SK-N-SH (cell line): ENCODE measurements at regions of chr12 and their contacts with region 1.

Region 1: DNA sequence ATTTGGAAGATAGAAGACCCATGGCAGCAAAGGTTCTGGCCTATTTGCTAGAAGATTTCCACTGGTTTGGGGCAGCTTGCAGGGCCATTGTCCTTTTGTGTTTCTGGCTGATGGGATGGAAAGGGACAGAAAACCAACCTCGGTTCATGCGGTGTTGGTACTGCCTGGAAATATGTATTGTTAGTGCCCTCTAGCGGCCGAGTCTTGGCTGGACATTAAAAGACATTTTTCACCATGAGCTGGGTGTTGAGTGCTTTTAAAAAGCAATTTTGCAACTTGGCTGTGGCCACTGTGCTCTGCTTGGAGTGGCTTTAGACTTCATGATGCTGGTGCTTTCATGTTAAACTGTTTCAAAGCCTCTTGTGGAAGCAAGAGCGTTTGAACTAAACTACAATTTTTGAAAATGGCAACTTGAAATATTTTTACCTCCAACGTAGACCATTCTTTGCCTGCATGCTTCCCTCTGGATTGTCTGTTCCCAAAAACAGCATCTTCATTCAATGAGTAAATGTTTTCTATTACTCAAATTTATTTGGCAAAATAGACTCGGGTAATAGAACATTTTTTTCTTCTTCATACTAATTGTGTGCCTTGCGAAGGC is 102.7 kb upstream of the TBX5 start:
- DNase-seq: peak; percentile 64
- H3K4me3 ChIP-seq: no peak overlapping the region; a peak in 1 of 4 replicates
- H3K27ac ChIP-seq: no peak overlapping the region
- H3K4me1 ChIP-seq: no peaks in the 10 kb centered on the region
- H3K27me3 ChIP-seq: peaks cover 14% of the 10 kb centered on the region; the same call in 1 of the 2 replicates
- CTCF ChIP-seq: peak; percentile 83
- EP300 ChIP-seq: no peak
- RAD21 ChIP-seq: peak; percentile 79

Region 2: DNA sequence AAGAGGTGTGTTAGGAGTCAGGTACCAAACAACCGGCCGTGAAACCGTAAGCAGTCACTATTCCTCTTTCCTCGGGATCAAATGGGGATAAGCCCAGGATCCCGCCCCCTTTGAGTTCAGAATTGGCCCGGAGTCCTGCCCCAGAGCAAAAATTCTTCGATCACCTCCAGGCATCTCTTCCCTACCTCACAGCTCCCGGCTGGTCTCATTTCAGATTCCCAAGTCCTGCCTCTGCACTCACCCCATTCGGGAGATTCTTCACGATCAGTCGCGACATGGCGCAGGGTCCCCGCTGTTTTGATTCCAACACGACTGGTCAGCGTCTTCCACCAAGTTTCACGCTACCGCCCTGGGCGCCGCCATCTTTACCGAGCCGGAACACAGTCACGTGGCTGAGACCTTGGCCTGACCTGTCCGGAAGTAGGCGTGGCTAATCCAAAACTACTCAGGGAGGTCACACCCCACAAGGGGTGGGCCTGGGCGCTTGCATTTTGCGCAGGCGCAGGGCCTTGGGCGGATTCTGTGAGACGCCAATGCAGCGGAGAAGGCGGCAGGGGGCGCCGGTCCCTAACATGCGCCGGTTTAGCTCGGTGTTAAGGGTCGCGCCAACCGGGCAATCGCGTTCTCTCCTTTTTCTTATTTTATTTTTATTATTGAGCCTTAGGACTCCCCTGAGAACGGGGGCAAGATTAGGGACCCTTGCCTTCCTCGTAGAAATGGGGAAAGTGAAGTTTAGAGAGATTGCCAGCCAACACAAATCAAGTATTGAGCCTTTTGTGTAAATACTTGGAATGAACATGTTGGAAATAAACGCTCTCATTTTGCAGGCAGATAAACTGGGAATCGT is 542.5 kb before region 1 on chr12 and contains the start of gene RBM19:
- CTCF ChIA-PET with region 1: interaction called, 10 read pairs
- POLR2A ChIA-PET with region 1: no interaction called
- DNase-seq: peak; percentile 95
- H3K4me3 ChIP-seq: peak within 1 kb of the TSS; percentile 80 to 93
- H3K27ac ChIP-seq: peak within 1 kb of the TSS; percentile 23 to 39; a peak in 2 of 4 replicates
- H3K4me1 ChIP-seq: peaks cover 0 to 9% of the 10 kb centered on the region in 2 experiments; a peak in 3 of 4 replicates
- H3K27me3 ChIP-seq: peaks cover 17% of the 10 kb centered on the region; the same call in 1 of the 2 replicates
- CTCF ChIP-seq: peak; percentile 93
- EP300 ChIP-seq: no peak
- RAD21 ChIP-seq: peak; percentile 55
- polyA plus RNA-seq, gene RBM19: 16.6 and 20.3 TPM in 2 replicates

Region 3: DNA sequence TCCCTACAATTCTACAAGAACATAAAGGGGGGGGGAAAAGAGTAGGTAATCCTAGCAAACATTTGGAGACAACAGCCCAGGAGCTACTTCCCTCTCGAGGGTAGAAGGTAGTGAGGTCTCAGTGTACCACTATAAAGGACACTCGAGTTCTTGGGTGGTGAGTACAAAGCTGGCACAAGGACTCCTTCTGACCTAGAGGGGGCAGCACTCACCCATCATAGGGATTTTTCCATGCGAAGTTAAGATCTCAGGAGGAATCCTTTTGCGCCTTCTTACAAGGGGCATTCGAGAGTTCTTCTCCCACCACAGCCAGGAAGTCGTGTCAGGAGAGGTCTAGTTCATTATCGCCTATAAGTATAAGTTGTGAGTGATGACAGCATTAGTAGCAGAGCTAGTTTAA is 342.3 kb before region 1 on chr12:
- CTCF ChIA-PET with region 1: interaction called, 40 read pairs
- POLR2A ChIA-PET with region 1: no interaction called
- DNase-seq: peak; percentile 34
- H3K4me3 ChIP-seq: peak overlapping the region in 1 of 2 experiments; percentile 41; a peak in 1 of 4 replicates
- H3K27ac ChIP-seq: no peak overlapping the region
- H3K4me1 ChIP-seq: no peaks in the 10 kb centered on the region
- H3K27me3 ChIP-seq: no peaks in the 10 kb centered on the region; the same call in 1 of the 2 replicates
- CTCF ChIP-seq: peak; percentile 66
- EP300 ChIP-seq: no peak
- RAD21 ChIP-seq: peak; percentile 70

Region 4: DNA sequence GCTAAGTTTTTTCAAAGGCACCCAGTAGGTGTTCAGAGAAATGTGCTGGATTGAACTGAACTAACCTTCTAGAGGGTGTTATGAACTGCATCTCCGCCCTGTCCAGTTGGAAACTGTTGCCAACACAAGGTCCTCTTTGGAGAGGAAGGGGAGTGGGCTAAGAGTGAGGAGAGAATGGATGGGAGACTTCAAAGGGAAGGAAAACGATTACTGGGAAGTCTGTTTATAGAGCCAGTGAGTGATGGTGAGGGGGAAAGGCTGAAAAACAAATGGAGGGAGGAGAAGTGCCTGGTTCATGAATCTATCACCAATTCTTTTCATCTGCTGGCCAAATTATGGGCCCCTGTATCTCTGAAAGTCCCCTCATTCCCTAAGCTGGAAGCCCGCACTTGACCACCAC is 16.7 kb before region 1 on chr12:
- CTCF ChIA-PET with region 1: interaction called, 19 read pairs
- POLR2A ChIA-PET with region 1: no interaction called
- DNase-seq: no peak
- H3K4me3 ChIP-seq: no peak overlapping the region
- H3K27ac ChIP-seq: no peak overlapping the region
- H3K4me1 ChIP-seq: no peaks in the 10 kb centered on the region
- H3K27me3 ChIP-seq: no peaks in the 10 kb centered on the region; the same call in 1 of the 2 replicates
- CTCF ChIP-seq: no peak
- EP300 ChIP-seq: no peak
- RAD21 ChIP-seq: no peak

Region 5: DNA sequence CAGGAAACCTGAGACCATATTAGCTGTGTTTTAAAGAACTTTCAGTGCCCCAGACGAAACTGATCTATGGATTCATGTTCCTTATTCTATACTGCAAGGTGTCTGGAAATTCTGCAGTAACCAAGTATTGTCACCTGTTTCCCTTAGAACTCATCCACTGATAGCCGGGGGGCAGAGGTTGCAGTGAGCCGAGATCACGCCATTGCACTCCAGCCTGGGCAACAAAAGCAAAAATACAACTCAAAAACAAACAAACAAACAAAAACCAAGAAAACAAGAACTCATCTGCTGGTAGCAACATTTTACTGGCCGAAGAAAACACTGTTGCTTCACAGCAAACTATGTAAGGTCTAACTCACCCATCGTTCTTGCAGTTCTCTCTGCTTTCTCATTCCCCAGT is 11.6 kb after region 1 on chr12:
- CTCF ChIA-PET with region 1: interaction called, 14 read pairs
- POLR2A ChIA-PET with region 1: no interaction called
- DNase-seq: no peak
- H3K4me3 ChIP-seq: no peak overlapping the region
- H3K27ac ChIP-seq: no peak overlapping the region
- H3K4me1 ChIP-seq: no peaks in the 10 kb centered on the region
- H3K27me3 ChIP-seq: no peaks in the 10 kb centered on the region; the same call in 1 of the 2 replicates
- CTCF ChIP-seq: no peak
- EP300 ChIP-seq: no peak
- RAD21 ChIP-seq: no peak